CD14-positive monocyte (primary cell): ENCODE measurements at regions of chr5 and their contacts with region 1.

Region 1: GRCh38 chr5:153964880-153965645 is 73.6 kb downstream of the FAM114A2 start:
- DNase-seq: peak in 2 of 3 donors; percentile 5 to 14
- H3K4me3 ChIP-seq: no peak overlapping the region
- H3K4me3 Mint-ChIP-seq: no peak overlapping the region
- H3K27ac ChIP-seq: no peak overlapping the region
- H3K27ac Mint-ChIP-seq: peak overlapping the region in 1 of 7 donors; percentile 19
- H3K4me1 ChIP-seq: no peaks in the 10 kb centered on the region
- H3K4me1 Mint-ChIP-seq: peaks cover 8% of the 10 kb centered on the region
- H3K27me3 ChIP-seq: no peaks in the 10 kb centered on the region
- H3K27me3 Mint-ChIP-seq: peaks cover 5 to 8% (median 7%) of the 10 kb centered on the region in 3 donors
- CTCF ChIP-seq: peak; percentile 74

Region 2: DNA sequence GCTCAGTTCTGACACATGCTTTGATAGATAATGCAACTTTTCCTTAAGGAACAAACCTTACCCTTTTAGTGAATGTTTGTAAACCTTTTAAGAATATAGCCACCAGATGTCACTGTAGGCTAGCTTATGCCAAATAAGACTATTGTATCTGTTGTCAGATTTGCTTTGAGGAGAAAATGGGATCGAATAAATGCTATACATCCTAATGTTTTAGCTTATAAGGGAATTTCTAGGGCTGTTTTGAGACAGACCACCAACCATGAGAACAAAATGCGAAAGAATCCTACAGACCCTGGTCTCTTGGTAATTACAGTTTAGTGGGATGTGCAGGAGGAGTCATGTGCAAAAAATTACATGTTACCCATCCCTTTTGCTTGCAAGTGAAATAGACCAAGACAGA is 1432.3 kb before region 1 on chr5:
- intact Hi-C with region 1: loop called in 1 of 2 experiments (anchors 5 kb)
- DNase-seq: no peak
- H3K4me3 ChIP-seq: no peak overlapping the region
- H3K4me3 Mint-ChIP-seq: no peak overlapping the region
- H3K27ac ChIP-seq: no peak overlapping the region
- H3K27ac Mint-ChIP-seq: no peak overlapping the region
- H3K4me1 ChIP-seq: peaks cover 4 to 5% of the 10 kb centered on the region in 2 donors
- H3K4me1 Mint-ChIP-seq: peaks cover 6% of the 10 kb centered on the region
- H3K27me3 ChIP-seq: no peaks in the 10 kb centered on the region
- H3K27me3 Mint-ChIP-seq: peaks cover 1 to 2% (median 2%) of the 10 kb centered on the region in 3 donors
- CTCF ChIP-seq: peak; percentile 32

Region 3: GRCh38 chr5:153601377-153601776 is 363.7 kb before region 1 on chr5:
- intact Hi-C with region 1: no loop called
- DNase-seq: no peak
- H3K4me3 ChIP-seq: no peak overlapping the region
- H3K4me3 Mint-ChIP-seq: no peak overlapping the region
- H3K27ac ChIP-seq: no peak overlapping the region
- H3K27ac Mint-ChIP-seq: no peak overlapping the region
- H3K4me1 ChIP-seq: no peaks in the 10 kb centered on the region
- H3K4me1 Mint-ChIP-seq: no peaks in the 10 kb centered on the region
- H3K27me3 ChIP-seq: no peaks in the 10 kb centered on the region
- H3K27me3 Mint-ChIP-seq: no peaks in the 10 kb centered on the region
- CTCF ChIP-seq: no peak

Region 4: GRCh38 chr5:153756540-153756939 is 208.5 kb before region 1 on chr5:
- intact Hi-C with region 1: no loop called
- DNase-seq: no peak
- H3K4me3 ChIP-seq: no peak overlapping the region
- H3K4me3 Mint-ChIP-seq: no peak overlapping the region
- H3K27ac ChIP-seq: no peak overlapping the region
- H3K27ac Mint-ChIP-seq: no peak overlapping the region
- H3K4me1 ChIP-seq: no peaks in the 10 kb centered on the region
- H3K4me1 Mint-ChIP-seq: no peaks in the 10 kb centered on the region
- H3K27me3 ChIP-seq: no peaks in the 10 kb centered on the region
- H3K27me3 Mint-ChIP-seq: no peaks in the 10 kb centered on the region
- CTCF ChIP-seq: no peak

Region 5: DNA sequence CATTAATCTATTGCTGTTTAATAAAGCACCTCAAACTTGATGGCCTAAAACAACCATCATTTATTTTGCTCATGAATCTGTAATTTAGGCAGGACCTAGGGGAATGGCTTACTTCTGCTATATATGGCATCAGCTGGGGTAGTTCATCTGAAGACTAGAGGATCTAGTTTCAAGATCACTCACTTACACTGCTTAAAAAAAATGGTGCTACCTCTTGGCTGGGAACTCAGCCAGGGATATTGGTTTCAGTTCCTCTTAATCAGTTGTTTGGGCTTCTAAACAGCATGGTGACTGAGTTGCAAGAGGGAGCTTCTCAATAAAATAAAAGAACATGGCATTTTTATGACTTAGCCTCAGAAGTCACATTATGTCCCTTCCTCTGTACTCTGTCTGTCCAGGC is 68.4 kb before region 1 on chr5:
- intact Hi-C with region 1: no loop called
- DNase-seq: peak; percentile 1 to 22 (median 6)
- H3K4me3 ChIP-seq: no peak overlapping the region
- H3K4me3 Mint-ChIP-seq: no peak overlapping the region
- H3K27ac ChIP-seq: no peak overlapping the region
- H3K27ac Mint-ChIP-seq: no peak overlapping the region
- H3K4me1 ChIP-seq: no peaks in the 10 kb centered on the region
- H3K4me1 Mint-ChIP-seq: peaks cover 5% of the 10 kb centered on the region
- H3K27me3 ChIP-seq: no peaks in the 10 kb centered on the region
- H3K27me3 Mint-ChIP-seq: no peaks in the 10 kb centered on the region
- CTCF ChIP-seq: no peak

Region 6: DNA sequence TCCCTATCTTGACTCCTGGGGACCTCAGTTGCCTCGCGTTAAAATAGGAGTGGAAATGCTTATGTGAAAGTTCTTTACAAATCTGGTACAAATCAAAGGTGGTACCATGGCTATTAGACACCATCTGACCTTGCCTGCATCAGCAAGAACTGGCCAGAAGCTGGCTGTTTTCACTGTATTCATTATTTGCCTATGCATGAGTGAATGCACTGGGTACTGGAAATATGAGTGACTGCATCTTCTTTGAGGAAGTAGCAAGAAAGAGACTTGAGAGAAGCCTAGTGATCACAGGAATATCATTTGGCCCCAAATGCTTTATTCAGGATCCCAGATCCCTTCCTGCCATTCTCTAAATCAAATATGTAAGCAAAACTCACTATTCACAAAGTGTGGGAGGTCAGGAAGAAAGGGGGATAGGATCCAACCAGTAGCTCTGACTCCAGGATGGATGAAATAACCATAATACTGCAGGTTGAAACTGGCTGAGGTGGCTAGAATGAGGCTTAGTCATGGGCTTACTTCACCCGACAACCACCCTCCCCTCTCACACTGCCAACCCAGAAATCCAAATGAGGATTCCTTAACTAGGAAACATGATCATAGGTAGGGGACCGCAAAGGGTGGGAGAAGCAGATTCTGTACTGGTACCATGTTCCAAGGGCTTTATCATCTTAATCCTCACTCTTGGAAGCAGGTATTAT is 17.0 kb after region 1 on chr5:
- intact Hi-C with region 1: no loop called
- DNase-seq: no peak
- H3K4me3 ChIP-seq: no peak overlapping the region
- H3K4me3 Mint-ChIP-seq: no peak overlapping the region
- H3K27ac ChIP-seq: no peak overlapping the region
- H3K27ac Mint-ChIP-seq: no peak overlapping the region
- H3K4me1 ChIP-seq: no peaks in the 10 kb centered on the region
- H3K4me1 Mint-ChIP-seq: no peaks in the 10 kb centered on the region
- H3K27me3 ChIP-seq: no peaks in the 10 kb centered on the region
- H3K27me3 Mint-ChIP-seq: peaks cover 0 to 5% (median 2%) of the 10 kb centered on the region in 3 donors
- CTCF ChIP-seq: no peak